ENCODE measurements at regions of chr5 and their contacts with region 1.

Region 1: DNA sequence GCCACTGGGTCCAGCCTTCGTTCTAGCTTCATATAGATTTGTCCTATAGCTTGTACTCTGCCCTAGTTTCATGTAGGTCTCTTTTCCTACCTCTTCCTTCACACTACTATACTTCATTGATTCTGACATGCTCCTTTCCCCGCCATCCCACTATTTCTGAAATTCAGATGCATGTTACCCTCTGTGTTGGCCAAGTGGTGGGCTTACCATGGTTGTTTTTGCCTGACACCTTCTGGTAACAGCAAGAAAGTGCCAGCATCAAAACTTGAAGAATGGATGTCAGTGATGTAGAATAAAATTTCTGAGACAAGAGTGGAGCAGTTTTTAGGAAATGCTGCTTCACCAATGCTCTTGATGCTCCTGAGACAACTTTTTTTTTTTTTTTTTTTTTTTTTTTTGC is 19.5 kb upstream of the SERINC5 start:
- DNase-seq: peak in 4 of 35 experiments; percentile 6 to 60 (median 26)
- ATAC-seq: peak; percentile 64 to 81 (median 74)
- H3K4me3 ChIP-seq: no peak overlapping the region
- H3K4me3 Mint-ChIP-seq: no peak overlapping the region
- H3K27ac ChIP-seq: no peak overlapping the region
- H3K27ac Mint-ChIP-seq: no peak overlapping the region
- H3K4me1 ChIP-seq: peaks cover 11 to 23% of the 10 kb centered on the region in 2 experiments
- H3K4me1 Mint-ChIP-seq: peaks cover 19 to 23% (median 21%) of the 10 kb centered on the region in 3 donors
- H3K27me3 ChIP-seq: no peaks in the 10 kb centered on the region
- H3K27me3 Mint-ChIP-seq: no peaks in the 10 kb centered on the region

Region 2: DNA sequence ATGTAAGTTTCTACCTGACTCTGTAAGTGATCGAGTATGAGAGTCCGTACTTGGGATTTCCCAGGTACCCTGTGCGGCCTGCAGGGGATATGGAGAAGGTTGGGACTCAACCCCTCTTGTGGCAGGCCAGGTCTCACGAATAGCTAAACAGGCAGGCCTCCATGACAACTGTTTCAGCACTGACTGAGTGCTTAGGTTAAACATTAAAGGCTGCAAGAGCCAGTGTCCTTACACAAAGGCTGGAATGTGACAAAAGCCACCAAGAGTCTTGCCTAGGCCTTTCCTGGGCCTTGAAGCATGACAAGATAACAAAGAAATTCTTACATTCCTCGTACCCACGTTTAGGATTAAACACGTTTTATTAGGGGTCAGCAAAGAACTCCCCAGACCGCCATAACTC is 181.6 kb before region 1 on chr5:
- CTCF ChIA-PET with region 1: interaction called, 10 to 11 read pairs
- POLR2A ChIA-PET with region 1: interaction called in 1 of 2 experiments, 8 read pairs
- DNase-seq: no peak
- ATAC-seq: no peak
- H3K4me3 ChIP-seq: no peak overlapping the region
- H3K4me3 Mint-ChIP-seq: no peak overlapping the region
- H3K27ac ChIP-seq: no peak overlapping the region
- H3K27ac Mint-ChIP-seq: peak overlapping the region; percentile 87 to 94
- H3K4me1 ChIP-seq: peaks cover 11 to 23% of the 10 kb centered on the region in 2 experiments
- H3K4me1 Mint-ChIP-seq: peaks cover 29 to 45% (median 31%) of the 10 kb centered on the region in 3 donors
- H3K27me3 ChIP-seq: no peaks in the 10 kb centered on the region
- H3K27me3 Mint-ChIP-seq: no peaks in the 10 kb centered on the region

Region 3: GRCh38 chr5:80101993-80102392 is 173.4 kb before region 1 on chr5:
- CTCF ChIA-PET with region 1: no interaction called
- POLR2A ChIA-PET with region 1: interaction called, 6 to 10 read pairs
- DNase-seq: no peak
- ATAC-seq: no peak
- H3K4me3 ChIP-seq: no peak overlapping the region
- H3K4me3 Mint-ChIP-seq: peak overlapping the region in 1 of 3 donors; percentile 48
- H3K27ac ChIP-seq: no peak overlapping the region
- H3K27ac Mint-ChIP-seq: no peak overlapping the region
- H3K4me1 ChIP-seq: peaks cover 10 to 21% of the 10 kb centered on the region in 2 experiments
- H3K4me1 Mint-ChIP-seq: peaks cover 41 to 67% (median 46%) of the 10 kb centered on the region in 3 donors
- H3K27me3 ChIP-seq: no peaks in the 10 kb centered on the region
- H3K27me3 Mint-ChIP-seq: no peaks in the 10 kb centered on the region

Region 4: DNA sequence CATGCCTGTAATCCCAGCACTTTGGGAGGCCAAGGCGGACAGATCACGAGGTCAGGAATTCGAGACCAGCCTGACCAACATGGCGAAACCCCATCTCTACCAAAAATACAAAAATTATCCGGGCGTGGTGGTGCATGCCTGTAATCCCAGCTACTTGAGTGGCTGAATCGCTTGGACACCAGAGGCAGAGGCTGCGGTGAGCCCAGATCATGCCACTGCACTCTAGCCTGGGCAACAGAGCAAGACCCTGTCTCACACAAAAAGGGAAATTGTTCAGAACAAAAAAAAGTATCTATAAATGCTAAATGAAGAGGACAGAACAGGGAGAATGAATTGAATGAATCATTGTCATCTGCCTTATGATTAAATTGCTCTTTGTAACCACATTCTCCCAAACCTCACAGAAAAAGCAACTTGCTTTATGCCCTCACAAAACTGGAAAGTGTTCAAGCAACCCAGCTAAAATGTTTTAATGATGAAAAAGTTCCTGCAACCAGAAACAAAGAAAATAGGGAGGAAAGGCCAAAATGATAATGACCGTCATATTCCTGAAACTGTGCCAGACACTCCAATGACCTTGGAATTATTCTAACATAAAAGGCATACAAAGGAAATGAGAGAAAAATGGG is 103.2 kb before region 1 on chr5:
- CTCF ChIA-PET with region 1: interaction called in 1 of 2 experiments, 11 read pairs
- POLR2A ChIA-PET with region 1: no interaction called
- DNase-seq: no peak
- ATAC-seq: no peak
- H3K4me3 ChIP-seq: no peak overlapping the region
- H3K4me3 Mint-ChIP-seq: no peak overlapping the region
- H3K27ac ChIP-seq: no peak overlapping the region
- H3K27ac Mint-ChIP-seq: peak overlapping the region; percentile 14 to 52
- H3K4me1 ChIP-seq: peaks cover under 1 to 6% of the 10 kb centered on the region in 2 experiments
- H3K4me1 Mint-ChIP-seq: peaks cover 46 to 59% (median 56%) of the 10 kb centered on the region in 3 donors
- H3K27me3 ChIP-seq: no peaks in the 10 kb centered on the region
- H3K27me3 Mint-ChIP-seq: no peaks in the 10 kb centered on the region

Region 5: GRCh38 chr5:80191991-80192398 is 83.4 kb before region 1 on chr5:
- CTCF ChIA-PET with region 1: interaction called, 3 to 10 read pairs
- POLR2A ChIA-PET with region 1: interaction called, 3 to 6 read pairs
- DNase-seq: peak in 32 of 35 experiments; percentile 19 to 65 (median 44)
- ATAC-seq: peak; percentile 78 to 85 (median 80)
- H3K4me3 ChIP-seq: peak overlapping the region; percentile 0 to 35
- H3K4me3 Mint-ChIP-seq: peak overlapping the region; percentile 55 to 84 (median 71)
- H3K27ac ChIP-seq: peak overlapping the region; percentile 85
- H3K27ac Mint-ChIP-seq: peak overlapping the region; percentile 96
- H3K4me1 ChIP-seq: peaks cover 79 to 89% of the 10 kb centered on the region in 2 experiments
- H3K4me1 Mint-ChIP-seq: peaks cover 86 to 98% (median 88%) of the 10 kb centered on the region in 3 donors
- H3K27me3 ChIP-seq: no peaks in the 10 kb centered on the region
- H3K27me3 Mint-ChIP-seq: no peaks in the 10 kb centered on the region

Region 6: GRCh38 chr5:80255732-80256479 is 19.4 kb before region 1 on chr5 and contains the start of gene SERINC5:
- CTCF ChIA-PET with region 1: interaction called, 4 to 13 read pairs
- POLR2A ChIA-PET with region 1: no interaction called
- DNase-seq: peak; percentile 64 to 87 (median 79)
- ATAC-seq: peak; percentile 81 to 88 (median 83)
- H3K4me3 ChIP-seq: peak within 1 kb of the TSS; percentile 97 to 98
- H3K4me3 Mint-ChIP-seq: peak within 1 kb of the TSS; percentile 95 to 97 (median 97)
- H3K27ac ChIP-seq: peak within 1 kb of the TSS; percentile 89
- H3K27ac Mint-ChIP-seq: peak within 1 kb of the TSS; percentile 96 to 97
- H3K4me1 ChIP-seq: peaks cover 30 to 54% of the 10 kb centered on the region in 2 experiments
- H3K4me1 Mint-ChIP-seq: peaks cover 45 to 55% (median 54%) of the 10 kb centered on the region in 3 donors
- H3K27me3 ChIP-seq: no peaks in the 10 kb centered on the region
- H3K27me3 Mint-ChIP-seq: no peaks in the 10 kb centered on the region
- total RNA-seq, gene SERINC5: 109 to 170 (median 112) TPM